Mammary epithelial cell (primary cell): ENCODE measurements at regions of chr9 and their contacts with region 1.

Region 1: GRCh38 chr9:36995927-36996705 is 38.0 kb downstream of the PAX5 start:
- DNase-seq: peak; percentile 20
- H3K4me3 ChIP-seq: no peak overlapping the region
- H3K27ac ChIP-seq: no peak overlapping the region
- H3K4me1 ChIP-seq: no peaks in the 10 kb centered on the region
- H3K27me3 ChIP-seq: no peaks in the 10 kb centered on the region
- CTCF ChIP-seq: peak; percentile 35 to 59

Region 2: GRCh38 chr9:36584622-36585470 is 411.3 kb before region 1 on chr9:
- CTCF ChIA-PET with region 1: interaction called, 15 read pairs
- dilution Hi-C with region 1: no loop called
- in situ Hi-C with region 1: no loop called
- intact Hi-C with region 1: no loop called
- DNase-seq: peak; percentile 76
- H3K4me3 ChIP-seq: no peak overlapping the region
- H3K27ac ChIP-seq: peak overlapping the region; percentile 88
- H3K4me1 ChIP-seq: peaks cover 16% of the 10 kb centered on the region
- H3K27me3 ChIP-seq: no peaks in the 10 kb centered on the region
- CTCF ChIP-seq: no peak

Region 3: GRCh38 chr9:37010180-37010579 is 14.1 kb after region 1 on chr9:
- CTCF ChIA-PET with region 1: no interaction called
- dilution Hi-C with region 1: no loop called
- in situ Hi-C with region 1: no loop called
- intact Hi-C with region 1: no loop called
- DNase-seq: no peak
- H3K4me3 ChIP-seq: no peak overlapping the region
- H3K27ac ChIP-seq: no peak overlapping the region
- H3K4me1 ChIP-seq: no peaks in the 10 kb centered on the region
- H3K27me3 ChIP-seq: peaks cover 13% of the 10 kb centered on the region
- CTCF ChIP-seq: no peak

Region 4: DNA sequence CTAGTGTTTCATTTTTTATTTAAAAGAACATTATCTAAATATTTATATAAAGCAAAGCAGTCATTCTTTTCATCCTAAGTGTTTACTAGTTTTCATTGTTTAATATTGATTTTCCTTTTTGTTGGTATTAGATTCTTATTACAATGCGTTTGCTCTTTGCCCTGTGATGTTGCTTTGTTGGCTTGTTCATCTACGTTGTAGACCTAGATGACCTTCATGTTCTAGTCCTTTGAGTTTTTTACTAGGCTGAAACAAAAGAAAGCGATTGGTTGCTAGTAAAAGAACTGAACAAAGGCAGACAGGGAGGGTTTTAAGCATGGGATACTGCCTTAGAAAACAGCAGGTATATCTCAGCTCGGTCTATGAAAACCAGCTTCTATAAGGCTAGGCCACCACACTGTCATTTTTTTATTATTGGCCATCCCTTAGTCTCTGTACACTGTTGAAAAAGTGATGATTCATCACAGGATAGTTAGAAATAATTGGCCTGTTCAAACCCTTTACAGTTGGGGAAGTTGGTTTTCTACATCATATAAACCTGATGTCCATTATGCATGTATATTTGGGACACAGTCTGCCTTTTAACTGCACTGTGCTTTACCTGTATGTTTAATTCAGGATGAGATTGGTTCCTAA is 243.2 kb after region 1 on chr9:
- CTCF ChIA-PET with region 1: no interaction called
- dilution Hi-C with region 1: no loop called
- in situ Hi-C with region 1: no loop called
- intact Hi-C with region 1: no loop called
- DNase-seq: no peak
- H3K4me3 ChIP-seq: no peak overlapping the region
- H3K27ac ChIP-seq: no peak overlapping the region
- H3K4me1 ChIP-seq: no peaks in the 10 kb centered on the region
- H3K27me3 ChIP-seq: no peaks in the 10 kb centered on the region
- CTCF ChIP-seq: no peak

Region 5: DNA sequence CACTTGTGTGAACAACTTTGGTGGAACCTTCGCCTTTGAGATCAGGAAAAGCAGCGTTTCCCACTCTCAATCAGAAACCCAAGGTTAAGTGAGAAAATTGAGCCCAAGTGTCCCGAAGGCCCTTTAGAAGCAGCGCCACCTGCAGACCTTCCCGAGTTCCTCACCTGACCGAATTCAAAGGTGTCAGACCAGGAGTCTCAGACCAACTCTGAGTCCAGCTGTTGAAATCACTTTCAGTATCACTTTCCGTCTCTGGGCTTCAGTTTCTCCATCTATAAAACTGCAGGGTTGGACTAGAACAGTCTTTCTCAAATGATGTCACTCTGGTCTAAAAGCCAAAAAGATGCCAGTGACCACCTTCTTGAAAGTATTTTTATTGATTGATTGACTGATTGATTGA is 394.6 kb after region 1 on chr9:
- CTCF ChIA-PET with region 1: no interaction called
- dilution Hi-C with region 1: no loop called
- in situ Hi-C with region 1: no loop called
- intact Hi-C with region 1: loop called (anchors 1 kb)
- DNase-seq: peak; percentile 29
- H3K4me3 ChIP-seq: no peak overlapping the region
- H3K27ac ChIP-seq: no peak overlapping the region
- H3K4me1 ChIP-seq: no peaks in the 10 kb centered on the region
- H3K27me3 ChIP-seq: no peaks in the 10 kb centered on the region
- CTCF ChIP-seq: peak; percentile 37 to 48